Naive thymus-derived CD4-positive, alpha-beta T cell (primary cell): ENCODE measurements at regions of chr17 and their contacts with region 1.

Region 1: DNA sequence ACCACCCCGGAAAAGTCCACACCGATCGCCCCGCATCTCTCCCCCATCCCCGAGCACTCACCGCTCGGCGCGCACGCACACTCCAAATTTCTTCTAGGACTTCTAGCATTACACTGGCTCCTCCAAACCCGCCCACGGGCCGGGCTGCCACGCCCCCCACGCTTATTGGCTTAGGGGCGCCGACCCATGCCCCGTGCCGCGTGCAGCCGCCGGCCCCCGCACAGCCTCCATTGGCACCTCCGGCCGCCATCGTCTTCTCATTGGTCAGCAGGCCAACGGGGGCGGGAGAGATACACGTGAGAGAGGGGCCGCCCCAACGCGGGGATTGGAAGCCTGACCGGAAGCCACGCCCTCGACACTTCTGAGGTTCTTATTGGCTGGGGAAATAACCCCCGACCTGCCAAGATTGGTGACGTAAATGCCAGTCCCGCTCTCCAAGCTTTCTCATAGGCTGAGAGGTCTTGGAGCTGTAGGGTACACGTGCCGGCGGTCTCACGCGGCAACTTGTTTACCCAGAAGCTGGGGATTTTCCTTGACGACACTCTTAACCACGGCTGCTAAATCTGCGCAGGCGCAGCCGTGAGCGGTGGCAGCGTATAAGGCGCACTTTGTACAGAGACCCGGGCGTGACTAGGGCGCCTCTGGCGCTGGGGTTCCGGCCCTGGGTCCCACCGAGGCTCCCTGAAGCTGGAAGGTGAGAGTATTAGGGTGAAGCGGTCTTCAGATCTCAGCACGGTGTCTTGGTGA is 4.2 kb upstream of the PER1 start:
- DNase-seq: peak; percentile 96 to 100 (median 100)
- ATAC-seq: peak; percentile 83
- H3K4me3 ChIP-seq: peak overlapping the region; percentile 93
- H3K4me3 Mint-ChIP-seq: no peak overlapping the region
- H3K27ac ChIP-seq: peak overlapping the region; percentile 97
- H3K27ac Mint-ChIP-seq: no peak overlapping the region
- H3K4me1 ChIP-seq: peaks cover 58 to 75% of the 10 kb centered on the region in 2 donors
- H3K4me1 Mint-ChIP-seq: peaks cover 33 to 73% (median 65%) of the 10 kb centered on the region in 7 donors
- H3K27me3 ChIP-seq: no peaks in the 10 kb centered on the region
- H3K27me3 Mint-ChIP-seq: no peaks in the 10 kb centered on the region

Region 2: GRCh38 chr17:7844292-7845154 is 311.9 kb before region 1 on chr17:
- CTCF ChIA-PET with region 1: no interaction called
- POLR2A ChIA-PET with region 1: no interaction called
- intact Hi-C with region 1: loop called (anchors 1 to 2 kb)
- DNase-seq: peak; percentile 74 to 87 (median 79)
- ATAC-seq: peak; percentile 42
- H3K4me3 ChIP-seq: peak overlapping the region; percentile 84
- H3K4me3 Mint-ChIP-seq: peak overlapping the region; percentile 85 to 99 (median 94)
- H3K27ac ChIP-seq: peak overlapping the region; percentile 100
- H3K27ac Mint-ChIP-seq: peak overlapping the region; percentile 90 to 100 (median 99)
- H3K4me1 ChIP-seq: peaks cover 11 to 26% of the 10 kb centered on the region in 2 donors
- H3K4me1 Mint-ChIP-seq: peaks cover 19 to 41% (median 29%) of the 10 kb centered on the region in 7 donors
- H3K27me3 ChIP-seq: no peaks in the 10 kb centered on the region
- H3K27me3 Mint-ChIP-seq: peaks cover 0 to 2% (median 0%) of the 10 kb centered on the region in 5 donors

Region 3: DNA sequence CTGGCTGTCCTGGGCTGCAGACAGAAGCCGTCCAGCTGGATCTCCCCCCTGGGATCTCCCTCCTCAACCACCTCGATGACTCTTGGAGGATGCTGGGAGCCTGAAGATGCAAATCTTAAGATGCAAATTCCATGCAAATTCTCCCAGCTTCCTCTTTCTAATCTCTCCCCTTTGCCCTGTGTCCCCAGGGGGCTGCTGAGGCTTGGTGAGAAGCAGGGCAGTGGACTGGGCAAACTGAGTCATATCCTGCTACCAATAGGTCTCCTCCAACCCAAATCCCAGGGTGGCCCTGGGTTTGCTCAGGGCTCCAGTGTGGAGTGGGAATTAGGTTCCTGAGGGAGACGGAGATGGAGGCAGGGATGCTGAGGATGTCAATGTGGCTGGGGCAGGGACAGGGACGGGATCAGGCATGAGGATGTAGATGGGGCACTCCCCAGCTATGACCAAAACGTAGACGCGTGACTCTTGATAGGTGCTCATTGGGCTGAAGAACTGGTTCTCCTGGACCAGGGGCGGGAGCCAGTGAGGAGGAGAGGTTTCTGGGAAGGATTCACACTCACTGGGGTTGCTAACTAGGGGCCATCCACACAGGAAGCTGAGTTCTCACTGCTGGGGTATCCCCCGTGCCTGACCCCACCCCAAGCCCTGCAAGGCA is 65.3 kb before region 1 on chr17:
- CTCF ChIA-PET with region 1: no interaction called
- POLR2A ChIA-PET with region 1: interaction called, 5 read pairs
- intact Hi-C with region 1: loop called (anchors 1 to 2 kb)
- DNase-seq: no peak
- ATAC-seq: no peak
- H3K4me3 ChIP-seq: no peak overlapping the region
- H3K4me3 Mint-ChIP-seq: no peak overlapping the region
- H3K27ac ChIP-seq: no peak overlapping the region
- H3K27ac Mint-ChIP-seq: no peak overlapping the region
- H3K4me1 ChIP-seq: peaks cover 5 to 13% of the 10 kb centered on the region in 2 donors
- H3K4me1 Mint-ChIP-seq: peaks cover 6 to 17% (median 15%) of the 10 kb centered on the region in 7 donors
- H3K27me3 ChIP-seq: peaks cover 0 to 5% of the 10 kb centered on the region in 2 donors
- H3K27me3 Mint-ChIP-seq: peaks cover 4 to 49% (median 21%) of the 10 kb centered on the region in 5 donors

Region 4: DNA sequence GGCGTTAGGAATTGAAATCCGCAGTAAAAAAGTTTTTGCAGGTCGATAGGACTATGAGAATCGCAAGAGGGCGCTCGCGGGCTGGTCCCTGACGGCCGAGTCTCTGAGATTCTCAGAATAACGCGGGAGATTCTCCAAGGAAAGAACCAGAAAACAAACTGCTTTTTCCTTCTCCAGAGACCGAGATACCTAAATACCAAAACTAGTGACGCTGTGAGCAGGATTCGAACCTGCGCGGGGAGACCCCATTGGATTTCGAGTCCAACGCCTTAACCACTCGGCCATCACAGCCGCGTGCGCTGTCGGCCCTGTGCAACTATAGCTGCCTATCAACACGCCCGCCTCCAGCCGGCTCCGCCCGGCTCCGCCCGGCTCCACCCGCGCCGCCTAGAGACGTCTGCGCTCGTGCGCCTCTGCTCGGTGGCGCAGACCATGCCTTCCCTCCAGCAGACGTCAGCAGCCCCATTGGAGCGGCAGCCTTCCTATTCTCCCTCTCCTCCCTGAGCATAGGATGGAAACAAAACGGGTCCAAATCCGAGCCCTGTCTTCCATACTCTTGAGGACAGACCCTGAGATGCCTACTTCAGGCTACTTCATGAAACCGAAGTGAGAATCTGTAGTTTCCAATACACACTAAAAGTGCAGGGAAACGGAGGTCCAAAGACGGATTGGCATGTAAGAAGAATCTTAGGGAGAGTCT is 17.6 kb before region 1 on chr17:
- CTCF ChIA-PET with region 1: interaction called, 24 read pairs
- POLR2A ChIA-PET with region 1: interaction called, 136 read pairs
- intact Hi-C with region 1: loop called (anchors 1 kb)
- DNase-seq: peak; percentile 93 to 99 (median 98)
- ATAC-seq: peak; percentile 90
- H3K4me3 ChIP-seq: peak overlapping the region; percentile 76
- H3K4me3 Mint-ChIP-seq: no peak overlapping the region
- H3K27ac ChIP-seq: peak overlapping the region; percentile 84
- H3K27ac Mint-ChIP-seq: no peak overlapping the region
- H3K4me1 ChIP-seq: peaks cover 8 to 17% of the 10 kb centered on the region in 2 donors
- H3K4me1 Mint-ChIP-seq: peaks cover 0 to 5% (median 0%) of the 10 kb centered on the region in 7 donors
- H3K27me3 ChIP-seq: no peaks in the 10 kb centered on the region
- H3K27me3 Mint-ChIP-seq: peaks cover 0 to 11% (median 0%) of the 10 kb centered on the region in 5 donors

Region 5: DNA sequence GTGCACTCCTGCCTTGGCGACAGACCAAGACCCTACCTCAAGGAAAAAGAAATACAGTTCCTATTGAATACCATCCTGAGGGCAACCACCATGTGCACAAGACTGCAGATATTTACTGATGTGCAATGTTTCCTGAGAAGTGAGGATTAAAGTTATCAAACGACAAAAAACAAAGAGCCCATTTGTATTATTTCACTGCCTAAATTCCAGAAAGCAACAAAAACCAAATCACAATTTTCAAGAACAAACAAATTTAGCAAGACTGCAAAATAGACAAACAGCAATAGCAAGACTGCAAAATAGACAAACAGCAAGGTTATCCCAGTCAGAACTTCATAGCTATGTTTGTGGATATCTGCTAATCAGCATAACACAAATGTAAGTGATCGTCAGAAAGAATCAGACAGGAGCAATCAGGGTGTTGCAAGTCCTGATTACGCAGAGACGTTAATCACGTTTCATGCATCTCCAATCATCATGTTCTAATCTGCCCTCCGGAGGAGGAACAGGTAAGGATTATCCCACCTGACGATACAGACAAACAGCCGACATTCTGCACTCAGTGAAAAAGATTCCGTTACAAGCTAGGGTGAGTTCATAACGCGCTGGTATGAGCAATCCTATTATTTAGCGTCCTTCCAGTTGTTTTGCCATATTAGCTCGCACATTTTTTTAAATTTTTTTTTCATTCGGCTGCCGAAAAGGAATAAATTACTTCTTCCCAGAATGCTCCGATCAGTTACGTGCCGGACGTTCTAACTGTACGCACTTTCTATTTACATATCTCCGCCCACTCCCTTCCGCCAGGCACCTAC is 16.8 kb after region 1 on chr17:
- CTCF ChIA-PET with region 1: interaction called, 9 read pairs
- POLR2A ChIA-PET with region 1: interaction called, 820 read pairs
- intact Hi-C with region 1: loop called (anchors 1 kb)
- DNase-seq: peak; percentile 49 to 95 (median 91)
- ATAC-seq: peak; percentile 91
- H3K4me3 ChIP-seq: peak overlapping the region; percentile 57
- H3K4me3 Mint-ChIP-seq: peak overlapping the region; percentile 80 to 96 (median 90)
- H3K27ac ChIP-seq: peak overlapping the region; percentile 92
- H3K27ac Mint-ChIP-seq: peak overlapping the region; percentile 99 to 100 (median 100)
- H3K4me1 ChIP-seq: peaks cover 26 to 39% of the 10 kb centered on the region in 2 donors
- H3K4me1 Mint-ChIP-seq: peaks cover 33 to 60% (median 52%) of the 10 kb centered on the region in 7 donors
- H3K27me3 ChIP-seq: no peaks in the 10 kb centered on the region
- H3K27me3 Mint-ChIP-seq: no peaks in the 10 kb centered on the region

Region 6: GRCh38 chr17:8294814-8295316 is 138.4 kb after region 1 on chr17:
- CTCF ChIA-PET with region 1: interaction called, 10 read pairs
- POLR2A ChIA-PET with region 1: interaction called, 16 read pairs
- intact Hi-C with region 1: loop called in 1 of 2 experiments (anchors 1 kb)
- DNase-seq: no peak
- ATAC-seq: no peak
- H3K4me3 ChIP-seq: peak overlapping the region; percentile 96
- H3K4me3 Mint-ChIP-seq: peak overlapping the region; percentile 87 to 97 (median 90)
- H3K27ac ChIP-seq: peak overlapping the region; percentile 86
- H3K27ac Mint-ChIP-seq: peak overlapping the region; percentile 81 to 98 (median 93)
- H3K4me1 ChIP-seq: peaks cover 4 to 13% of the 10 kb centered on the region in 2 donors
- H3K4me1 Mint-ChIP-seq: peaks cover 23 to 45% (median 38%) of the 10 kb centered on the region in 7 donors
- H3K27me3 ChIP-seq: no peaks in the 10 kb centered on the region
- H3K27me3 Mint-ChIP-seq: no peaks in the 10 kb centered on the region